MCF 10A (cell line): ENCODE measurements at regions of chr6 and their contacts with region 1.

Region 1: GRCh38 chr6:1311400-1312202 is at the start of gene FOXQ1:
- DNase-seq: peak; percentile 45
- H3K4me3 Mint-ChIP-seq: peak within 1 kb of the TSS; percentile 77
- H3K27ac Mint-ChIP-seq: peak within 1 kb of the TSS; percentile 70
- H3K4me1 Mint-ChIP-seq: peaks cover 10% of the 10 kb centered on the region
- H3K27me3 Mint-ChIP-seq: no peaks in the 10 kb centered on the region
- CTCF ChIP-seq: no peak
- total RNA-seq, gene FOXQ1: 5.6 and 6.9 TPM in 2 replicates

Region 2: DNA sequence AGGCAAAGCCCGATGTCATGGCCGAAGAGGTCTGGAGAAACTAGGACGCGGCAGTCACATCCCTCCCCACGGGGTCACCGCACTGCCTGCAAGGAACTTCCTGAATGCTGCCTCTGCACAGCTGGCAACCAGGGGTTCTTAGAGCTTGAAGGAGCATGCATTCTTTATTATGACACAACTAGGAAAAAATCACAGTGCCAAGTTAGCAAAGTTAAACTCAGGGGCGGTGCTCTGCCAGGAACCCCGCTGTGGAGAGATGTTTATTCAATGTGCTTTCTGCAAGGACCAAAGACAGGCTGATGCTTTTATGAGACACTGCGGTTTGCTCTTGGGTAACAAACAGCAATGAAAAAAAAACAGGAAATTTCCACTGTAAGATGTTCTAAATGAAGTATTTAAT is 287.0 kb before region 1 on chr6:
- CTCF ChIA-PET with region 1: interaction called, 3 read pairs
- POLR2A ChIA-PET with region 1: interaction called, 7 read pairs
- intact Hi-C with region 1: loop called (anchors 2 kb)
- DNase-seq: peak; percentile 93
- H3K4me3 Mint-ChIP-seq: peak overlapping the region; percentile 29
- H3K27ac Mint-ChIP-seq: no peak overlapping the region
- H3K4me1 Mint-ChIP-seq: peaks cover 30% of the 10 kb centered on the region
- H3K27me3 Mint-ChIP-seq: no peaks in the 10 kb centered on the region
- CTCF ChIP-seq: no peak

Region 3: GRCh38 chr6:1047981-1048541 is 263.5 kb before region 1 on chr6:
- CTCF ChIA-PET with region 1: no interaction called
- POLR2A ChIA-PET with region 1: no interaction called
- intact Hi-C with region 1: no loop called
- DNase-seq: no peak
- H3K4me3 Mint-ChIP-seq: no peak overlapping the region
- H3K27ac Mint-ChIP-seq: no peak overlapping the region
- H3K4me1 Mint-ChIP-seq: no peaks in the 10 kb centered on the region
- H3K27me3 Mint-ChIP-seq: peaks cover 11% of the 10 kb centered on the region
- CTCF ChIP-seq: no peak

Region 4: GRCh38 chr6:1088492-1089001 is 223.1 kb before region 1 on chr6:
- CTCF ChIA-PET with region 1: interaction called, 5 read pairs
- POLR2A ChIA-PET with region 1: interaction called, 52 read pairs
- intact Hi-C with region 1: loop called (anchors 10 kb)
- DNase-seq: peak; percentile 14
- H3K4me3 Mint-ChIP-seq: no peak overlapping the region
- H3K27ac Mint-ChIP-seq: peak overlapping the region; percentile 0
- H3K4me1 Mint-ChIP-seq: peaks cover 17% of the 10 kb centered on the region
- H3K27me3 Mint-ChIP-seq: no peaks in the 10 kb centered on the region
- CTCF ChIP-seq: no peak

Region 5: DNA sequence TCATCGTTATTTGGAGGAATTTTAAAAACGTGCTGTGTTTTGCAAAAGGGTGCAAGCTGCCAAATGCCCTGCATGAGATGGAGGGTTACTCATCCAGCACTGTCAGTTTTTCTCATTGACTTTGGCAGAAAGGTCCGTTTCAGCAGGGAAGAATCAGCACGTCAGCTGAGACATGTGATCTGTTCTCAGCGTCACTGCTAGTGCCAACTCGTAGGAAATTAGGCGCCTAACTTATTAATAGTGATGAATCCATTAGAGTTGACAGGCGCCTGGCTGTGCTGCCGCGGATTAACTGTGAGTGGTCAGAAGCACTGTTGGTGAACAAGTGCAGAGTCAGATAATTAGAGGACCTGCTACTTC is 175.2 kb before region 1 on chr6:
- CTCF ChIA-PET with region 1: interaction called, 6 read pairs
- POLR2A ChIA-PET with region 1: interaction called, 43 read pairs
- intact Hi-C with region 1: loop called (anchors 5 kb)
- DNase-seq: peak; percentile 82
- H3K4me3 Mint-ChIP-seq: peak overlapping the region; percentile 52
- H3K27ac Mint-ChIP-seq: peak overlapping the region; percentile 74
- H3K4me1 Mint-ChIP-seq: peaks cover 26% of the 10 kb centered on the region
- H3K27me3 Mint-ChIP-seq: no peaks in the 10 kb centered on the region
- CTCF ChIP-seq: no peak

Region 6: GRCh38 chr6:1286972-1287610 is 24.5 kb before region 1 on chr6:
- CTCF ChIA-PET with region 1: interaction called, 3 read pairs
- POLR2A ChIA-PET with region 1: interaction called, 66 read pairs
- intact Hi-C with region 1: loop called (anchors 2 kb)
- DNase-seq: peak; percentile 99
- H3K4me3 Mint-ChIP-seq: peak overlapping the region; percentile 66
- H3K27ac Mint-ChIP-seq: peak overlapping the region; percentile 98
- H3K4me1 Mint-ChIP-seq: peaks cover 26% of the 10 kb centered on the region
- H3K27me3 Mint-ChIP-seq: no peaks in the 10 kb centered on the region
- CTCF ChIP-seq: no peak

Region 7: GRCh38 chr6:1335367-1336037 is 23.9 kb after region 1 on chr6:
- CTCF ChIA-PET with region 1: interaction called, 13 read pairs
- POLR2A ChIA-PET with region 1: interaction called, 32 read pairs
- intact Hi-C with region 1: loop called (anchors 1 kb)
- DNase-seq: peak; percentile 95
- H3K4me3 Mint-ChIP-seq: no peak overlapping the region
- H3K27ac Mint-ChIP-seq: peak overlapping the region; percentile 39
- H3K4me1 Mint-ChIP-seq: peaks cover 25% of the 10 kb centered on the region
- H3K27me3 Mint-ChIP-seq: no peaks in the 10 kb centered on the region
- CTCF ChIP-seq: no peak

Region 8: GRCh38 chr6:1424306-1424928 is 112.8 kb after region 1 on chr6:
- CTCF ChIA-PET with region 1: no interaction called
- POLR2A ChIA-PET with region 1: no interaction called
- intact Hi-C with region 1: no loop called
- DNase-seq: peak; percentile 78
- H3K4me3 Mint-ChIP-seq: no peak overlapping the region
- H3K27ac Mint-ChIP-seq: no peak overlapping the region
- H3K4me1 Mint-ChIP-seq: peaks cover 6% of the 10 kb centered on the region
- H3K27me3 Mint-ChIP-seq: peaks cover 26% of the 10 kb centered on the region
- CTCF ChIP-seq: peak; percentile 69